HEK293 (cell line): ENCODE measurements at regions of chr2 and their contacts with region 1.

Region 1: DNA sequence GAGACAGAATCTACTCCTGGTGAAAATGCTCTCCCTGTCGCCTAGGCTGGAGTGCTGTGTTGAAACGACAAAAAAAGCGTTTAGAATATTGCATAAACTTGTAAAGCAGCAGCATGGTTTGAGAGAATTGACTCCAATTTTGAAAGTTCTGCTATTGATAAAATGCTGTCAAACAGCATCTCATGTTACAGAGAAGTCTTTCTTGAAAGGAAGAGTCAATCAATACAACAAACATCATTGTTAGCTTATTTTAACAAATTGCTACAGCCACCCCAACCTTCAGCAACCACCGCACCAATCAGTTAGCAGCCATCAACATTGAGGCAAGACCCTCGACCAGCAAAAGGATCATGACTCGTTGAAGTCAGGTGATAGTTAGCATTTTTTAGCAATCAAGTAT is 6.9 kb downstream of the C2orf76 start:
- H3K4me3 ChIP-seq: no peak overlapping the region
- H3K27ac ChIP-seq: no peak overlapping the region
- H3K4me1 ChIP-seq: no peaks in the 10 kb centered on the region
- CTCF ChIP-seq: no peak

Region 2: GRCh38 chr2:119198240-119198840 is 161.4 kb before region 1 on chr2:
- CTCF ChIA-PET with region 1: no interaction called
- POLR2A ChIA-PET with region 1: no interaction called
- H3K4me3 ChIP-seq: no peak overlapping the region
- H3K27ac ChIP-seq: no peak overlapping the region
- H3K4me1 ChIP-seq: no peaks in the 10 kb centered on the region
- CTCF ChIP-seq: no peak

Region 3: GRCh38 chr2:119397196-119397595 is 37.4 kb after region 1 on chr2:
- CTCF ChIA-PET with region 1: interaction called, 8 read pairs
- POLR2A ChIA-PET with region 1: interaction called, 10 read pairs
- H3K4me3 ChIP-seq: no peak overlapping the region
- H3K27ac ChIP-seq: no peak overlapping the region
- H3K4me1 ChIP-seq: no peaks in the 10 kb centered on the region
- CTCF ChIP-seq: no peak